Naive thymus-derived CD8-positive, alpha-beta T cell (primary cell): ENCODE measurements at regions of chr17 and their contacts with region 1.

Region 1: GRCh38 chr17:42819944-42820535 is 4.0 kb downstream of the BECN1 start:
- DNase-seq: peak in 9 of 10 donors; percentile 35 to 52 (median 48)
- ATAC-seq: peak in 1 of 2 donors; percentile 18
- H3K4me3 Mint-ChIP-seq: peak overlapping the region in 1 of 10 donors; percentile 45
- H3K27ac Mint-ChIP-seq: peak overlapping the region in 4 of 10 donors; percentile 27 to 72 (median 34)
- H3K4me1 Mint-ChIP-seq: peaks cover 4 to 47% (median 37%) of the 10 kb centered on the region in 4 donors
- H3K27me3 Mint-ChIP-seq: no peaks in the 10 kb centered on the region

Region 2: DNA sequence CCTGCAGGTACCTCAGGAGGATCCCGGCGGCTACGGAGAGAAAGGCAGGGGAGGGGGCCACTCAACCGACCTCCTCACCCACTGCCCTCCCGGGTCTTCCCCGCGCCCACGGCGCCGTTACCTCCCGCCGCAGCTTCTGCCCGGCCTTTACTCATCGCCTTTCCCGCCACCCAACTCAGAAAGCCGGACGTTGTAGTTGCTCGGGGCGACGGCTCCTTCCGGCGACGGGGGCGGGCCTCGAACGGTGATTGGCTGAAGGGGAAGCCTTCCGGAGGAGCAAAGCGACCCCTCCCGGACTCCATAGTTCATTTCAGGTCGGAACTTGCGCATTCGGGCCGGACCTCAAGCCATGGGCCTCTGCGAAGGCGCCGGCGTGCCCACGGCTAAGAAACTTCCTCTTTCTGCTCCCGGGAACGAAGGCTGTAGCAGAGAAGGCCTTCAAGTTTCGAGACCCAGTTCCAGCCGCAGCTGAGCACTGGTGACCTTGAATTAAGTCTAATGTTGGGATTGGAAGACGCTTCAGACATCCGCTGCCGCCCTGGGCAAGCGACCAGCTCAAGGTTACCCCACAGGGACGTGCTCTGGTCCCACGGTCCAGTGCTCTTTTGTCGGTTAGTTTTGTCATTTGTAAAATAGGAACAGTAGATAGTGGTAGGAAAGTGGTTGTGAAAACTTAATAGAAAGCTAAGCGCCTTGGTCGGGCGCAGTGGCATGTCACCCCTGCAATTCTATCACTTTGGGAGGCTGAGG is 242.3 kb before region 1 on chr17 and contains the start of gene PSMC3IP:
- POLR2A ChIA-PET with region 1: interaction called, 13 read pairs
- DNase-seq: peak; percentile 81 to 94 (median 86)
- ATAC-seq: peak; percentile 93
- H3K4me3 Mint-ChIP-seq: peak within 1 kb of the TSS; percentile 90 to 100 (median 98)
- H3K27ac Mint-ChIP-seq: peak within 1 kb of the TSS; percentile 86 to 99 (median 96)
- H3K4me1 Mint-ChIP-seq: peaks cover 14 to 39% (median 32%) of the 10 kb centered on the region in 4 donors
- H3K27me3 Mint-ChIP-seq: no peaks in the 10 kb centered on the region
- polyA plus RNA-seq, gene PSMC3IP: 0.69 to 1.1 (median 0.71) TPM

Region 3: GRCh38 chr17:42773290-42774035 is 46.6 kb before region 1 on chr17 and contains the start of gene VPS25:
- POLR2A ChIA-PET with region 1: interaction called, 11 read pairs
- DNase-seq: peak; percentile 56 to 87 (median 72)
- ATAC-seq: peak; percentile 97 to 98
- H3K4me3 Mint-ChIP-seq: peak within 1 kb of the TSS; percentile 97 to 100 (median 99)
- H3K27ac Mint-ChIP-seq: peak within 1 kb of the TSS; percentile 97 to 100 (median 99)
- H3K4me1 Mint-ChIP-seq: peaks cover 18 to 24% (median 23%) of the 10 kb centered on the region in 4 donors
- H3K27me3 Mint-ChIP-seq: peaks cover 0 to 4% (median 2%) of the 10 kb centered on the region in 5 donors
- polyA plus RNA-seq, gene VPS25: 43.9 to 64.5 (median 56.3) TPM

Region 4: DNA sequence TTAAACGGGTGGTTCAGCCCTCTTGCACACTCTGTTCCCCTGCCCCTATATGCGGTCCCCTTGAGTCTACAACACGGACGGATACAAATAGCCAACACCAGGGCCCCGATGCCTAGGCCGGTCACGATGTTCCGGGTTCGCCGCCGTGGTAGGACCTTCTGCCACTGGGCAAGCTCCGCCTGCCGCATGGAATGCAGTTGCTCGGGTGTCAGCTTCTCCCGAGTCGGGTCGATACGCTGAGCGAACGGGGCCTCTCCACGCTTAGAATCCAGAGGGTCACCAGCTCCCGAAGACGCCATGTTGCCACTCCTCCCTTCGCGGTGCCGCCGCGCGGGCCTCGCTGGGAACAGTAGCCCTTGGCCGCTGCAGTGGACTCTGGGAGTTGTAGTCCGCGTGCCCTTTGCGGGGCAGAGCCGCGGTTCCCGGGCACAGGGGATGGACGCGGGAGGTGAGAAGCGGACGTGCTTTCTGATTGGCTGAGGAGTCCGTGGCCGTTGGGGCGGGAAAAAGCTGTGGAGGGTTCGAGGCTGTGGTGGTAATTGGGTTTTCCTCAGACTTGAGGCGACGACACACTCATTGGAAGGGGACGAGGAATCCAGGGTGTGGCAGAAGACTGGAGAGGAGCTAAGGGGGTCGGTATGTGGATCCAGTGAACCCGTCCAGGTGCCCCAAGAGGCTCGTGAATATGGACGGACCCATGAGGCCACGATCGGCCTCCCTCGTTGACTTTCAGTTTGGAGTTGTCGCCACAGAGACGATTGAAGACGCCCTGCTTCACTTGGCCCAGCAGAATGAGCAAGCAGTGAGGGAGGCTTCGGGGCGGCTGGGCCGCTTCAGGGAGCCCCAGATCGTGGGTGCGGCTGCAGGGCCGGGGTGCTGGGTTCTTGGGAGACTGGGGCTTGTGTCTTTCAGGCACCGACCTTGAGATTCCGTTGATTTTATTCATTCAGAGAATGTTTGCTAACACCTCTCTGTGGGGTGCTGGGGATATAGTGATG is 21.4 kb before region 1 on chr17 and contains the starts of genes CNTD1 and COA3:
- POLR2A ChIA-PET with region 1: interaction called, 11 read pairs
- DNase-seq: peak; percentile 55 to 85 (median 66)
- ATAC-seq: peak; percentile 99
- H3K4me3 Mint-ChIP-seq: peak within 1 kb of the TSS; percentile 92 to 98 (median 96)
- H3K27ac Mint-ChIP-seq: peak within 1 kb of the TSS; percentile 68 to 95 (median 91)
- H3K4me1 Mint-ChIP-seq: peaks cover 21 to 45% (median 31%) of the 10 kb centered on the region in 4 donors
- H3K27me3 Mint-ChIP-seq: no peaks in the 10 kb centered on the region
- polyA plus RNA-seq, gene CNTD1: 0.12 to 0.52 (median 0.24) TPM
- polyA plus RNA-seq, gene COA3: 106 to 119 (median 118) TPM

Region 5: DNA sequence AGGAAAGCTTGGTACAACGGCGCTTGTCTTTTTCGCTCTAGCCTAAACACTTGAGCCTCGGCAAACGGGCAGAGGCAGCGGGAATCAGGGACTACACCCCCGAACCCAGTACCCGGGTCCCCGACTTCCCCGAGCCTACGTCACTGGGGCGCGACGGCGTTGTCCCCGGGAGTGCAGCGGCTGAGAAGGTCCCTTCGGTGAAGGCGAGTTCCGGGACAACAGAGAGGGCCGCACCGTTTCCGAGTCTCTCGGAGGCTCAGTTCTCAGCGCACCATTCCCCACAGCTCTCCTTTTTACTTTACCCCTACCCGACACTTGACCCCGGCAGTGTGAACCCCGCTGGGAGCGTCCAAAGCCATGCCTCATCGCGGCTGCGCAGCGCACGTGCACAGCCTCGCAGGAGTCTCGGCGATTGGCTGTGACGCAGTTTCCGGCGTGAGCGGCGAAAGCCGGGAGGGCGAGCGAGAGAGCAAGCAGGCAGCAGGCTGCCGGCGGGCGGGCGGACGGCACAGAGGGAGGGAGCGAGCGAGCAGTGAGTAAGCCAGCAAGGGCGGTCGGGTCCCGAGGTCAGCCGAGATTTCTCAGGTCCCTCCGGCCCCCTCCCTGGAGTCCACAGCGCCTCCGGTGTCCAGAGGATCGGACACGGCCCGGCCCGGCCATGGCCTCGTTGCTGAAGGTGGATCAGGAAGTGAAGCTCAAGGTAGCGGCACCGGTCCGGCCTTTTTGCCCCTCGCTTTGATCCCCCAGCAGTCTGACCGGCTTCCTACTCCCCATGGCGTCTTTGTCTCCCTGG is 13.1 kb after region 1 on chr17 and contains the start of gene PSME3:
- POLR2A ChIA-PET with region 1: interaction called, 53 read pairs
- DNase-seq: peak; percentile 80 to 95 (median 88)
- ATAC-seq: peak; percentile 92 to 96
- H3K4me3 Mint-ChIP-seq: peak within 1 kb of the TSS; percentile 92 to 98 (median 96)
- H3K27ac Mint-ChIP-seq: peak within 1 kb of the TSS; percentile 94 to 100 (median 100)
- H3K4me1 Mint-ChIP-seq: peaks cover 19 to 31% (median 29%) of the 10 kb centered on the region in 4 donors
- H3K27me3 Mint-ChIP-seq: no peaks in the 10 kb centered on the region
- polyA plus RNA-seq, gene PSME3: 117 to 123 (median 120) TPM